H1 (cell line): ENCODE measurements at regions of chr1 and their contacts with region 1.

Region 1: DNA sequence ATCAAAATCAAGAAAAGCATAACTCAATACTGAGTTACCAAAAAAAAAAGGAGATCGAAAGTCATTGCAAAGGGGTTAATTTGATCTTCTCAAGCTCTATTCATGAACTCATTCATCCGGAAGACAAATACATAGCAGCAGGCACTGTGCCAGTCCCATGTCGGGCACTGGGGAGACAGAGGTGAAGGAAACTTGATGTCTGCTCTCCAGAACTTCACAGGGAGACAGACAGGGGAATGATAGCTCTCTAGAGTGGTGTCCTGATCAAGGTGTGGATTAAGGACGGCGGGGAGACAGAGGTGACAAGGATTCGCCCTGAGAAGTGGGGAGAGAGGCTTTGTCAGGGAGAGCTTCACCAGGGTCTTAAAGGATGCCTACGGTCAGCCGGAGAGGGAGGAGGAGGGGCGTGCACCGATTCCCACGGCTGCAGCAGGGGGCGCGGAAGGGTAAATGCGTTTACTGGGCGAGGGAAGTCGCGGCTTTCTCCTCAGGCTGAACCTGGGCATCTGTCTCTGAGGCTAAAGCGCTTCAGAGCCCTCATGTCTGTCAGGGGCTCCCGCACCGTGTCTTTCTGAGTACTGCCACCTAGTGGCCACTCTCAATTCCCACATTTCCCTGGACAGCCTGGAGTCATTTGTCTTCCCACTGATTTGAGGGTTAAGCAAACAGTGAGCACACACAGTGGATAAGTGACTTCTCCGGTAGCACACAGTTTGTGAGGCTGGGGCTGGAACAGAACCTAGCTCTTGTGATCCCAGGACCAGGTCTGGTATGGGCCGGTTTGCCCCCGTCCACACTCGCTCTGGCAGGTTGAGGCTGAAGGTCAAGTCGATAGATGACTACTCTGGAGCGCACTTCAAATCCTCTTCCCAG is 152.8 kb downstream of the TENT5C start:
- DNase-seq: peak; percentile 85
- H3K4me3 ChIP-seq: peak overlapping the region; percentile 3 to 51 (median 23); a peak in 5 of 8 replicates
- H3K27ac ChIP-seq: no peak overlapping the region
- H3K4me1 ChIP-seq: peaks cover 0 to 6% (median 2%) of the 10 kb centered on the region in 4 experiments; a peak in 3 of 7 replicates
- H3K27me3 ChIP-seq: no peaks in the 10 kb centered on the region
- CTCF ChIP-seq: peak; percentile 46 to 93 (median 84)
- EP300 ChIP-seq: no peak
- POLR2A ChIP-seq: no peak
- RAD21 ChIP-seq: peak; percentile 69 to 79

Region 2: GRCh38 chr1:117534995-117535467 is 223.6 kb before region 1 on chr1:
- CTCF ChIA-PET with region 1: interaction called, 128 read pairs
- POLR2A ChIA-PET with region 1: no interaction called
- DNase-seq: peak; percentile 34 to 59
- H3K4me3 ChIP-seq: no peak overlapping the region
- H3K27ac ChIP-seq: no peak overlapping the region
- H3K4me1 ChIP-seq: no peaks in the 10 kb centered on the region
- H3K27me3 ChIP-seq: no peaks in the 10 kb centered on the region
- CTCF ChIP-seq: peak; percentile 28 to 72 (median 47)
- EP300 ChIP-seq: no peak
- POLR2A ChIP-seq: no peak
- RAD21 ChIP-seq: peak; percentile 65 to 67

Region 3: DNA sequence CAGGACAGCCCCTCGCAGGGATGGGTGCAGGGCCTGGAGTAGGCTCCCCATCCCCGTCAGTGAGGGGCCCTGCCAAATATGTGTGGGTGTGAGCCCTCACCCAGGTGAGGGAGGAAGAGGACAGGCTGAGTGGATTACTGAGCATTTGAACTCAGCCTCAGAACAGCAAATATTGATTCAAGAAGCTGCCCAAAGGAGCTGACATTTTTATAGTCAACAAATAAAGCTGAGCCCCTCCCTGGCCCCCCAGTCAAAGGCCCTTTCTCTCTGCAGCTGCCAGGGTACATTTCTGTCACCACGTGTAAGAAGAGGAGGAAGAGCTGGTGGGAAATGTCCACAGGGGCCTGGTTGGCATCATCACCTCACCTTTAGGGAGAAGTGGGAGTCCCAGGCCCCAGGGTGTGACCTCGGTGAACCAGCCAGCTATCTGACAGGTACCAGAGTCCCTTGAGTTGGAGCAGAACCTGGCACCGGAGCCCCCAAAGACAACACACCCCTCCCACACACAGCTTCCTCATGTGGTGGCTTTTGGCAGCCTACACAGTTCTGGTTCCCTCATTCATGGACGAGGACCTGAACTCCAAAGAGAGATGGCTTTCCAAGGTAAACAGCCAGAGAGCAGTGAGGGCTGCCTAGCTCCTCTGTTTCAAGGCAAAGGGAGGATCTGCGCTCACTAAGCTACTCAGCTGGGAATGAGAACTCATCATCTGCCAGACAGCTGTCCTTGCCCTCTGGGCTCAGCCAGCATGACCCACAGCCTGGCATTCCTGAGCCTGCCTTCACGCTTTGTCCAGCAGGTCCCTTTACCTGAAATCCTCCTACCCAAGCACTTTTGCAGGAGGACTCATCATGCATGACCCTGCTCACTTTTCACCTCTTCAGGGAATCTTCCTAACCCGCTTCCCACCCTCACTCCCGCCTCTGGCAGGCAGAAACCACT is 195.8 kb before region 1 on chr1:
- CTCF ChIA-PET with region 1: interaction called, 10 read pairs
- POLR2A ChIA-PET with region 1: no interaction called
- DNase-seq: peak in 1 of 2 experiments; percentile 24
- H3K4me3 ChIP-seq: no peak overlapping the region
- H3K27ac ChIP-seq: no peak overlapping the region
- H3K4me1 ChIP-seq: no peaks in the 10 kb centered on the region
- H3K27me3 ChIP-seq: no peaks in the 10 kb centered on the region
- CTCF ChIP-seq: no peak
- EP300 ChIP-seq: no peak
- POLR2A ChIP-seq: no peak
- RAD21 ChIP-seq: no peak

Region 4: GRCh38 chr1:117674521-117675397 is 83.9 kb before region 1 on chr1:
- CTCF ChIA-PET with region 1: interaction called, 11 read pairs
- POLR2A ChIA-PET with region 1: no interaction called
- DNase-seq: no peak
- H3K4me3 ChIP-seq: no peak overlapping the region
- H3K27ac ChIP-seq: no peak overlapping the region
- H3K4me1 ChIP-seq: peaks cover 0 to 2% (median 0%) of the 10 kb centered on the region in 4 experiments; a peak in 3 of 7 replicates
- H3K27me3 ChIP-seq: no peaks in the 10 kb centered on the region
- CTCF ChIP-seq: peak in 1 of 3 experiments; percentile 37; a peak in 2 of 4 replicates
- EP300 ChIP-seq: no peak
- POLR2A ChIP-seq: no peak
- RAD21 ChIP-seq: peak; percentile 32 to 41; a peak in 3 of 4 replicates

Region 5: DNA sequence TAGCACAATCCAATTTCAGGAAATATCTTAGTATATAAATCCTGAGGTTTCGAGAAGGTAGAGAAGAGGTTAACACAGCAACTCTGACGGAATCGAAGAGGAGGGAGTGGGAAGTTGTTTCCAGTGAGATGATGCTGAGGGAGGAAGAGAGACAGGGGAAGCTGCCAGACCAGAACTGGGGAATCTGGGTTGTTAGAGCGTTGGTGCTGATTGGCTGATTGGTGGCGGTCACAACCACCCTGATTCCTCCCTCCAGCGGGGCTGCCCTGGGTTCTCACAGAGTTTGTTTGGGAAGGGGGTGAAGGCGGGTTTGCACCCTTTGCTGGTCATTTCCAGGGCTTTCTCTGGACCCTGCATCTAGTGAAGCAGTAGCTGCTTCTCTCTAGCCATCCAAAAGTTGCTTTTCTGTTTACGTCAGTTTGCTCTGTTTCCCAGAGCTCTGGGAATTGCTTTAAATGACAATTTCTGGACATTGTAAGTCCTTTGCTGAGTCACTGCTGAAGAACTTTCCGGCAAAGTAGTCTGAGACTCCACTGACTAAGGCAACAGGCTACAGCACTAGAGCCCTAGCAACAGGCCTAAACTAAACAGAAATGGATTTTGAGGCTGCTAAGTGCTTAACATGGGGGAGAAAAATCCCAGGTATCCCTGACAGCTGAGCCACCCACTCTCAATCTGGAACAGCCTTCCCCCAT is 62.7 kb before region 1 on chr1:
- CTCF ChIA-PET with region 1: interaction called, 10 read pairs
- POLR2A ChIA-PET with region 1: no interaction called
- DNase-seq: no peak
- H3K4me3 ChIP-seq: no peak overlapping the region
- H3K27ac ChIP-seq: no peak overlapping the region
- H3K4me1 ChIP-seq: no peaks in the 10 kb centered on the region
- H3K27me3 ChIP-seq: no peaks in the 10 kb centered on the region
- CTCF ChIP-seq: no peak
- EP300 ChIP-seq: no peak
- POLR2A ChIP-seq: no peak
- RAD21 ChIP-seq: no peak

Region 6: GRCh38 chr1:117732065-117732797 is 26.4 kb before region 1 on chr1:
- CTCF ChIA-PET with region 1: interaction called, 12 read pairs
- POLR2A ChIA-PET with region 1: no interaction called
- DNase-seq: no peak
- H3K4me3 ChIP-seq: no peak overlapping the region
- H3K27ac ChIP-seq: no peak overlapping the region
- H3K4me1 ChIP-seq: no peaks in the 10 kb centered on the region
- H3K27me3 ChIP-seq: no peaks in the 10 kb centered on the region
- CTCF ChIP-seq: no peak
- EP300 ChIP-seq: no peak
- POLR2A ChIP-seq: no peak
- RAD21 ChIP-seq: no peak

Region 7: GRCh38 chr1:117770981-117771531 is 12.4 kb after region 1 on chr1:
- CTCF ChIA-PET with region 1: interaction called, 12 read pairs
- POLR2A ChIA-PET with region 1: no interaction called
- DNase-seq: no peak
- H3K4me3 ChIP-seq: no peak overlapping the region
- H3K27ac ChIP-seq: no peak overlapping the region
- H3K4me1 ChIP-seq: no peaks in the 10 kb centered on the region
- H3K27me3 ChIP-seq: no peaks in the 10 kb centered on the region
- CTCF ChIP-seq: no peak
- EP300 ChIP-seq: no peak
- POLR2A ChIP-seq: no peak
- RAD21 ChIP-seq: no peak

Region 8: DNA sequence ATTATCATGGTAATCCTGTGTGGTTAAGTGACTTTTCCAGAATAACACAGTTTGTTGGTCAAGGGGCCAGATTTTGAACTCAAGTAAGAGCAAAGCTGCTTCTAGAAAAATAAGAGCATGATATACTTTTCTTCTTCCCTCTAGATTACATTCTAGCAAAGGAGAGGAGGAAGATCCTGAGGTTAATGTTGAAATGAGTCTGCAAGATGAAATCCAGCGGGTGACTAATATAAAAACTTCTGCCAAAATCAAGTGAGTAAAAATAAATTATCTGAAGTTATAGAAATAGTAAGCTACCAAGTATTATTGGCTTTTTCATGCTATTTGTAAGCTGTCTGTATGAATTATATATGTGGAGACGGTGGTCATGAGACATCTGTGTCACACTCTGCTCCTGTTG is 183.6 kb after region 1 on chr1:
- CTCF ChIA-PET with region 1: no interaction called
- POLR2A ChIA-PET with region 1: no interaction called
- DNase-seq: no peak
- H3K4me3 ChIP-seq: no peak overlapping the region
- H3K27ac ChIP-seq: no peak overlapping the region
- H3K4me1 ChIP-seq: no peaks in the 10 kb centered on the region
- H3K27me3 ChIP-seq: no peaks in the 10 kb centered on the region
- CTCF ChIP-seq: no peak
- EP300 ChIP-seq: no peak
- POLR2A ChIP-seq: no peak
- RAD21 ChIP-seq: no peak